Mammary epithelial cell (primary cell): ENCODE measurements at regions of chr1 and their contacts with region 1.

Region 1: GRCh38 chr1:91742848-91743292 is 143.1 kb downstream of the TGFBR3 start:
- DNase-seq: peak; percentile 55
- H3K4me3 ChIP-seq: no peak overlapping the region
- H3K27ac ChIP-seq: no peak overlapping the region
- H3K4me1 ChIP-seq: peaks cover 4% of the 10 kb centered on the region
- H3K27me3 ChIP-seq: no peaks in the 10 kb centered on the region
- CTCF ChIP-seq: no peak

Region 2: DNA sequence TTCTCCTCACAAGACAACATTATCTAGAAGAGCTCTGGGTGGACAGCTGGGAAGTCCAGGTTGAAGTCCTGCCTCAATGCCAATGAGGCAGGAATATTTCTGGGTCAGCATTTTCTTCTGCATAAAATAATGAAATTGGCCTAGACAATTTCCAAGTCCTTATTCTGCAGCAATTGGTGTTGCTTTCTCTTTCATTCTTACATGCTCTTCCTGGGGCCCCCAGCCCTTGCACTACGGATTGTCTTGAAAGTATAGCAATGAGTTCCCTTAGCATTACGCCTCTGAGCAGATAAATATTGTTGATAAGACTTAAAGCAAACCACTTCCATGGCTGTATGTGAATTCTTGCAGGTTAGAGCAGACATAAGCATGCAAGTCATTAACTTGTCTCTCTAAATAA is 45.5 kb before region 1 on chr1:
- CTCF ChIA-PET with region 1: no interaction called
- dilution Hi-C with region 1: no loop called
- in situ Hi-C with region 1: no loop called
- intact Hi-C with region 1: no loop called
- DNase-seq: no peak
- H3K4me3 ChIP-seq: no peak overlapping the region
- H3K27ac ChIP-seq: no peak overlapping the region
- H3K4me1 ChIP-seq: no peaks in the 10 kb centered on the region
- H3K27me3 ChIP-seq: peaks cover 8% of the 10 kb centered on the region
- CTCF ChIP-seq: no peak

Region 3: GRCh38 chr1:91811363-91812025 is 68.6 kb after region 1 on chr1:
- CTCF ChIA-PET with region 1: no interaction called
- dilution Hi-C with region 1: loop called (anchors 5 kb)
- in situ Hi-C with region 1: no loop called
- intact Hi-C with region 1: no loop called
- DNase-seq: no peak
- H3K4me3 ChIP-seq: no peak overlapping the region
- H3K27ac ChIP-seq: no peak overlapping the region
- H3K4me1 ChIP-seq: no peaks in the 10 kb centered on the region
- H3K27me3 ChIP-seq: peaks cover 24% of the 10 kb centered on the region
- CTCF ChIP-seq: no peak